ENCODE measurements at regions of chr9 and their contacts with region 1.

Region 1: DNA sequence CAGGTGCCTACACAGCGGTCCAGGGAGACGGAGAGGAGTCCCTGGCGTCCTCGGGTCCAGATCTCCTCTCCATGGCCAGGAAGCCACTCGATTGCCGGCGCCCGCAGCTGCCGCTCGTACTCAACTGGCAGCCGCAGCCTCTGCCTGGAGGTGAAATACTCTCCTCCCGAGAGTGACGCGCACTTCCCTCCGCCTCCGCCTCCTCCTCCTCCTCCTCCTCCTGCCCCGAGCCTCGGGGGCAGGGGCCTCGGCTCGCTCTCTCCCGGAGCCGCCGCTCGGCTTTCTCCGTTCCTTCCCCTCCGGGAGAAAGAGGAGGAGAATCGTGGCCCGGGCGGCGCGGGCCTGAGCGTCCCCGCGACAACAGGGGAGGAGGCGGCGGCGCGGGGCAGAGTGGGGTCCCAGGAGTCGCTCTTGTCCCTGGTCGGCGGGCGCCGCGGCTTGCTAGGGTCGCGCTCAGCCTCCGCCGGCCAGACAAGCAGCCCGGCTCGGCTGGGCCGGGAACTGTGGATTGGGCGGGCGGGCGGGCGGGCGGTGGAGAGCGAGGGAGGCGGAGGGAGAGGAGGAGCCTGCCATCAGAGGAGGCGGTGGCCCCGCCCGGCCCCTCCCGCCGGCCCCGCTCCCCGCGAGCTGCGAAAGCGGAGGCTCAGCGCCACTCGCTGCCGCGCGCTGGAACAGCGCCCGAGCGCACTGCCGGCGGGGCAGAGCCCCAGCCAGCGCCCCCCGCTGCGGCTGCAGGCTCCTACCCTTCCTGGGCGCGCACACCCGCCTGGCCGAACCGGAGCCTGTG is at the start of gene CEMIP2:
- DNase-seq: peak; percentile 94
- ATAC-seq: peak; percentile 78
- H3K4me3 Mint-ChIP-seq: peak within 1 kb of the TSS; percentile 94
- H3K27ac Mint-ChIP-seq: peak within 1 kb of the TSS; percentile 91
- H3K4me1 Mint-ChIP-seq: peaks cover 43% of the 10 kb centered on the region
- H3K27me3 Mint-ChIP-seq: no peaks in the 10 kb centered on the region
- total RNA-seq, gene CEMIP2: 34.1 to 41.0 TPM

Region 2: GRCh38 chr9:70258692-70259511 is 1509.7 kb before region 1 on chr9 and contains the start of gene SMC5:
- CTCF ChIA-PET with region 1: no interaction called
- POLR2A ChIA-PET with region 1: no interaction called
- intact Hi-C with region 1: loop called in 1 of 2 experiments (anchors 5 kb)
- DNase-seq: peak; percentile 92
- ATAC-seq: peak; percentile 83
- H3K4me3 Mint-ChIP-seq: peak within 1 kb of the TSS; percentile 89
- H3K27ac Mint-ChIP-seq: peak within 1 kb of the TSS; percentile 96
- H3K4me1 Mint-ChIP-seq: peaks cover 54% of the 10 kb centered on the region
- H3K27me3 Mint-ChIP-seq: no peaks in the 10 kb centered on the region
- total RNA-seq, gene SMC5: 39.0 to 43.0 TPM

Region 3: GRCh38 chr9:71604197-71605063 is 164.2 kb before region 1 on chr9:
- CTCF ChIA-PET with region 1: interaction called, 12 read pairs
- POLR2A ChIA-PET with region 1: no interaction called
- intact Hi-C with region 1: loop called (anchors 1 kb)
- DNase-seq: peak; percentile 90
- ATAC-seq: peak; percentile 78
- H3K4me3 Mint-ChIP-seq: no peak overlapping the region
- H3K27ac Mint-ChIP-seq: no peak overlapping the region
- H3K4me1 Mint-ChIP-seq: no peaks in the 10 kb centered on the region
- H3K27me3 Mint-ChIP-seq: no peaks in the 10 kb centered on the region

Region 4: GRCh38 chr9:71725590-71726338 is 42.8 kb before region 1 on chr9:
- CTCF ChIA-PET with region 1: no interaction called
- POLR2A ChIA-PET with region 1: no interaction called
- intact Hi-C with region 1: loop called in 1 of 2 experiments (anchors 2 kb)
- DNase-seq: no peak
- ATAC-seq: no peak
- H3K4me3 Mint-ChIP-seq: no peak overlapping the region
- H3K27ac Mint-ChIP-seq: no peak overlapping the region
- H3K4me1 Mint-ChIP-seq: peaks cover 9% of the 10 kb centered on the region
- H3K27me3 Mint-ChIP-seq: no peaks in the 10 kb centered on the region

Region 5: GRCh38 chr9:71783120-71783530 is 14.5 kb after region 1 on chr9:
- CTCF ChIA-PET with region 1: interaction called, 8 read pairs
- POLR2A ChIA-PET with region 1: interaction called, 16 read pairs
- intact Hi-C with region 1: loop called (anchors 1 kb)
- DNase-seq: peak; percentile 93
- ATAC-seq: peak; percentile 97
- H3K4me3 Mint-ChIP-seq: peak overlapping the region; percentile 68
- H3K27ac Mint-ChIP-seq: peak overlapping the region; percentile 98
- H3K4me1 Mint-ChIP-seq: peaks cover 48% of the 10 kb centered on the region
- H3K27me3 Mint-ChIP-seq: no peaks in the 10 kb centered on the region

Region 6: GRCh38 chr9:72154468-72155281 is 386.1 kb after region 1 on chr9:
- CTCF ChIA-PET with region 1: no interaction called
- POLR2A ChIA-PET with region 1: no interaction called
- intact Hi-C with region 1: no loop called
- DNase-seq: no peak
- ATAC-seq: no peak
- H3K4me3 Mint-ChIP-seq: no peak overlapping the region
- H3K27ac Mint-ChIP-seq: no peak overlapping the region
- H3K4me1 Mint-ChIP-seq: no peaks in the 10 kb centered on the region
- H3K27me3 Mint-ChIP-seq: peaks cover 24% of the 10 kb centered on the region

Region 7: DNA sequence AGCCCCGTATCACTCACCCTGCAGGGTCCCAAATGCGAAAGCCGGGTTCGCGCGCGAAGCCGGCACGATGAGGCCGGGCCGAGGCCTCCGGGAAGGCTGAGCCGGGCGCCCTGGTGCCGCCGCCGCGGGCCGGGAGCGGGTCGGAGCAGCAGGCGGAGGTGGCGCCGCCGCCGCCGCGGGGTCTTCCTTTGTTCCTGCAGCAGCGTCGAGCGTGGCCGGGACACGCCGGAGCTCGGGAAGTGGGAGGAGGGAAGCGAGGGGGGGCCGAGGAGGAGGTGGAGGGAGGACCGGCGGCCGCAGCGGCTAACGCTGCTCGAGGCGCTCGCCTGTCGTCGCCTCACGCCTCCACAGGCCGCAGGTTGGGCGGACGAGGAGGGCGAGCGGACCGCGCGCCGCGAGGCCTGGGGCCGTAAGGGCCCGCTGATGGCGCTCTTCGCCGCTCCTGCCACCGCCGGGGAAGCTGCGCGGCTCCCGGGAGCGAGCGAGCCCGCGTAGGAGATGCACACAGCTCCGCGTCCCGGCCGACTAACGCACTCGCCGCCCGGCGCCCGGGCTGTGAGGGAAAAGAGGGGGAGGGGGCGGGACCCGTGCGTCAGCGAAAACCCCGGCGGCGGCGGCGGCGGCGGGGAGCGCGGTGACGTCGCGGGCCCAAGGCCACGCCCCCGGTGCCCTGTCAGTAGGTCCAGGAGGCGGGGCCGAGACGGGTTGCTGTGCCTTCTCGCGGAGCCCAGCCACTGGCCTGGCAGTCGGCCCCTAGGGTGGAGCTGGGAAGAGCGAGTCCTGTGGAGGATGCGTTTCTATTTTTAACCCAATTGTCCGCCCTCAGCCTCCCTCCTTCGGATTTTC is 596.3 kb after region 1 on chr9 and contains the start of gene ZFAND5:
- CTCF ChIA-PET with region 1: no interaction called
- POLR2A ChIA-PET with region 1: no interaction called
- intact Hi-C with region 1: loop called in 1 of 2 experiments (anchors 5 kb)
- DNase-seq: peak; percentile 97
- ATAC-seq: peak; percentile 84
- H3K4me3 Mint-ChIP-seq: peak within 1 kb of the TSS; percentile 91
- H3K27ac Mint-ChIP-seq: peak within 1 kb of the TSS; percentile 99
- H3K4me1 Mint-ChIP-seq: peaks cover 37% of the 10 kb centered on the region
- H3K27me3 Mint-ChIP-seq: no peaks in the 10 kb centered on the region
- total RNA-seq, gene ZFAND5: 72.0 to 88.2 TPM

Region 8: DNA sequence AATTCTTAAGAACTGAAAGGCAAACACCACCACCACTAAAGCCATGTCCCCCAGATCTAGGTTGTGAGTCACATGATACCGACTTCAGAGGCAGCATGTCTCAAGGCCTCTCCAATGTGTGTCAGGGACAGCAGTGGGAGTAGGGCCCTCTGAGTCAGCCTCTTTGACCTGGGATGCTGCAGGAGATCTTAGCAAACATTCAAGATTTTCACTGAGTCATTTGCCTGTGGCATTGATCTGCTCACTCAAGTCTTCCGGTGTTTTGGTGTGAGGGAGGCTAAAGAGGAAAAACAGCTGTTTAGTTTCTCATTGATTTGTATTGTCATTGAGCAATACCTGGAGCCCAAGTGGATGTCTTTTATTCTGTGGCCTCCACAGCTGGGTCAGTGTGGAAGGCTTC is 789.0 kb after region 1 on chr9:
- CTCF ChIA-PET with region 1: no interaction called
- POLR2A ChIA-PET with region 1: no interaction called
- intact Hi-C with region 1: no loop called
- DNase-seq: peak; percentile 70
- ATAC-seq: peak; percentile 99
- H3K4me3 Mint-ChIP-seq: no peak overlapping the region
- H3K27ac Mint-ChIP-seq: peak overlapping the region; percentile 6
- H3K4me1 Mint-ChIP-seq: peaks cover 11% of the 10 kb centered on the region
- H3K27me3 Mint-ChIP-seq: no peaks in the 10 kb centered on the region

Region 9: DNA sequence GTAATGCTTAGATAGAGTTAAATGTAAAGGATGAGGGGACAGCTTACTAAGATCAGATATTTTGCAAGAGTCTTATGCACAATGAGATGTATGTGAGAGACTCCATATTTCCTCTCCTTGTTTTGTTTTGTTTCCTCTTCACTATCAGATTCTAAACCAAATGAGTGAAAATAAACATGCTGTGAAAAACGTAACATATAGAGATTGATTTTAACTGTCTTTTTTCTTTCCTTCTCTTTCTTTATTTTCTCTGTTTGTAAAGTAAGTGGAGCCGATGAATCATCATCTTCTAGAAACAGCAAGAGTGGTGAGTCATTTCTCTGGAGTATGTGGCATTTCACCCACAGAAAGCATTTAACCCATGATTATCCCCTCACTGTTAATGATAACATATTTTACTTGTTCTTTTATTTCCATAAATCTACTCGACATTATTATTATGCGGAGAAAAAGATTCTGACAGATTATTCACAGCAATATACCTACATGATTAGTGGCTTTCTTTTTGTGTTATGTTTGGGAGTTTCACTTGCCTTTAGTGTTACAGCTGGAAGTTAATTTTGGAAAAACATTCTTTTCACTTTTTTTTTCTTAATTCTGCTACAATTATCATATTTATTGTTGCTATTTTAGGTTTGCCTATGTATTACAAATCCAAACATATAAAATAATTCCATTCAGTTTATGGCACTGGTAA is 1380.9 kb after region 1 on chr9:
- CTCF ChIA-PET with region 1: no interaction called
- POLR2A ChIA-PET with region 1: no interaction called
- intact Hi-C with region 1: loop called in 1 of 2 experiments (anchors 10 kb)
- DNase-seq: no peak
- ATAC-seq: peak; percentile 65
- H3K4me3 Mint-ChIP-seq: peak overlapping the region; percentile 64
- H3K27ac Mint-ChIP-seq: peak overlapping the region; percentile 81
- H3K4me1 Mint-ChIP-seq: peaks cover 61% of the 10 kb centered on the region
- H3K27me3 Mint-ChIP-seq: no peaks in the 10 kb centered on the region